Dorsolateral prefrontal cortex (tissue), 120 donors: ENCODE measurements at regions of chr4 and their contacts with region 1.

Region 1: GRCh38 chr4:95549246-95550114 is 707 bp upstream of the UNC5C start:
- DNase-seq: peak; percentile 27 to 88 (median 80)
- H3K4me3 ChIP-seq: peak overlapping the region; percentile 57 to 94 (median 84)
- H3K27ac ChIP-seq: peak overlapping the region; percentile 94 to 100 (median 99)
- H3K27me3 ChIP-seq: no peaks in the 10 kb centered on the region
- CTCF ChIP-seq: peak in 11 of 56 donors; percentile 1 to 34 (median 13)

Region 2: GRCh38 chr4:95293014-95293413 is 256.5 kb before region 1 on chr4:
- intact Hi-C with region 1: loop called in 1 of 2 experiments (anchors 10 kb)
- DNase-seq: no peak
- H3K4me3 ChIP-seq: no peak overlapping the region
- H3K27ac ChIP-seq: peak overlapping the region in 50 of 59 donors; percentile 1 to 91 (median 66)
- H3K27me3 ChIP-seq: no peaks in the 10 kb centered on the region
- CTCF ChIP-seq: no peak

Region 3: GRCh38 chr4:95362906-95363558 is 186.4 kb before region 1 on chr4:
- intact Hi-C with region 1: loop called (anchors 5 kb)
- DNase-seq: peak in 1 of 10 donors; percentile 54
- H3K4me3 ChIP-seq: peak overlapping the region in 47 of 59 donors; percentile 0 to 58 (median 26)
- H3K27ac ChIP-seq: peak overlapping the region; percentile 29 to 90 (median 81)
- H3K27me3 ChIP-seq: no peaks in the 10 kb centered on the region
- CTCF ChIP-seq: peak in 49 of 56 donors; percentile 15 to 66 (median 43)

Region 4: GRCh38 chr4:95627024-95627605 is 77.6 kb after region 1 on chr4:
- intact Hi-C with region 1: no loop called
- DNase-seq: no peak
- H3K4me3 ChIP-seq: no peak overlapping the region
- H3K27ac ChIP-seq: no peak overlapping the region
- H3K27me3 ChIP-seq: no peaks in the 10 kb centered on the region
- CTCF ChIP-seq: no peak

Region 5: GRCh38 chr4:95640311-95640710 is 90.8 kb after region 1 on chr4:
- intact Hi-C with region 1: loop called in 1 of 2 experiments (anchors 5 kb)
- DNase-seq: no peak
- H3K4me3 ChIP-seq: peak overlapping the region in 1 of 59 donors; percentile 3
- H3K27ac ChIP-seq: peak overlapping the region in 36 of 59 donors; percentile 0 to 71 (median 42)
- H3K27me3 ChIP-seq: no peaks in the 10 kb centered on the region
- CTCF ChIP-seq: no peak

Region 6: GRCh38 chr4:95835672-95836071 is 286.2 kb after region 1 on chr4:
- intact Hi-C with region 1: loop called (anchors 5 to 10 kb)
- DNase-seq: no peak
- H3K4me3 ChIP-seq: no peak overlapping the region
- H3K27ac ChIP-seq: no peak overlapping the region
- H3K27me3 ChIP-seq: no peaks in the 10 kb centered on the region
- CTCF ChIP-seq: peak in 34 of 56 donors; percentile 12 to 47 (median 33)